ENCODE measurements at regions of chr2 and their contacts with region 1.

Region 1: DNA sequence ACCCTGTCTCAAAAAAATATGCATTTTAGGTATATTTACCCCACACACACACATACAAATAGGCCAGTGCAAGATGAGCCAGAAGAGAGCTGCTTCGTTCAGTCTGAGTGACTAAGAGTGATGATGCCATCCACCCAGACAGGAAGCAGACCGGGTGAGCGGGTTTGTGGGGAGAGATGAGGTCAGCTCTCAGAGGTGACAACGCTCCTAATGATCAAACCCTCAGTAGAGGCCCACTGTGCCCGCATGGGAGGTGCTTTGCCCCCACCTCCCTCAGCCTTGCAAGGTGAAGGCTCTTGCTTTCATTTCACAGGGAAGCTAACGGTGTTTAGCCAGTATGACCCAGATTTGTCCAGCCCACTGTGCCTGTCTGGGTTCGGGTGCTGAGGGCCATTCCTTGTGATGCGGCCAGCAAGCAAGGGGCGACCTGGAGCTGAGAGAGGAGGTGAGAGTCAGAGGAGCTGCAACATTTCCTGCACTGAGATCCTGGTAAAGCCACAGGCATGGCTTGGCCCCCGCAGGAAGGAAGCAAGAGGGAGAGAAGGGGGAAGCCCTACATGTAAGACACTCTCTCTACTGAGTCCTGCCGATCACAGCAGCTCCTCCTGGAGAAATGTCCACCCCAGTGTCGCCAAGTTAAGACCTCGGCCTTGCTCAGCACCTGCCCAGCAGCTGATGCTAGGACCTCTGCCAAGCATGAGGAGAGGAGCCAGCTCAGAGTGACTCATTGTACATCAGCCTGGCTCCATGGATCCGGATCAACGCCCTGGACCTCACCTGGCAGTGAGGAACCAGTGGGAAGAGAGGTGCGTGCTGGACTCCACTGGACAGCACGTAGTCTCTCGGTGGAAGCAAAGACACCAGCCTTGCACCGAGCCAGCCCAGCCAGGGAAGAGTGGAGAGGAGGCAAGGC is 37.0 kb downstream of the NIFK start:
- DNase-seq: peak; percentile 97
- ATAC-seq: peak; percentile 97
- H3K4me3 Mint-ChIP-seq: peak overlapping the region; percentile 81
- H3K27ac Mint-ChIP-seq: peak overlapping the region; percentile 98
- H3K4me1 Mint-ChIP-seq: peaks cover 52% of the 10 kb centered on the region
- H3K27me3 Mint-ChIP-seq: no peaks in the 10 kb centered on the region

Region 2: GRCh38 chr2:121400201-121400600 is 299.5 kb before region 1 on chr2:
- CTCF ChIA-PET with region 1: interaction called, 12 read pairs
- POLR2A ChIA-PET with region 1: no interaction called
- DNase-seq: no peak
- ATAC-seq: no peak
- H3K4me3 Mint-ChIP-seq: no peak overlapping the region
- H3K27ac Mint-ChIP-seq: no peak overlapping the region
- H3K4me1 Mint-ChIP-seq: peaks cover 3% of the 10 kb centered on the region
- H3K27me3 Mint-ChIP-seq: no peaks in the 10 kb centered on the region

Region 3: DNA sequence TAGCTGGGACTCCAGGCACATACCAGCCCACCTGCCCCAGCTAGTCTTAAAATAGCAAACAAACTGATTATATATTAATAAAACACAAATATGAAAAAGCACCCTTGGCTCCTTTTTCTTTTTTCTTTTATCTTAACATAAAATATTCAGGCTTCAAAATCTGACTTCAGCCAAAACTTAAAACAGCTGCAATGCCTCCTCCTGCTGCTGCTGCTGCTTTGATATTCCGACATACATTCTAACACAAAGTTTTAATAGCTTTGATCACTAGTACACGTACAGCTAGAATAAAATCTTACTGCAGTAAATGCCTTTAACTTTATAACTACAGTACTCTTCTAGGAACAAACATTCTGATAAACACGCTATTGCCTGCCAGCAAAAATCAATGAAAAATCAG is 240.4 kb before region 1 on chr2:
- CTCF ChIA-PET with region 1: no interaction called
- POLR2A ChIA-PET with region 1: no interaction called
- DNase-seq: no peak
- ATAC-seq: no peak
- H3K4me3 Mint-ChIP-seq: no peak overlapping the region
- H3K27ac Mint-ChIP-seq: no peak overlapping the region
- H3K4me1 Mint-ChIP-seq: no peaks in the 10 kb centered on the region
- H3K27me3 Mint-ChIP-seq: no peaks in the 10 kb centered on the region

Region 4: DNA sequence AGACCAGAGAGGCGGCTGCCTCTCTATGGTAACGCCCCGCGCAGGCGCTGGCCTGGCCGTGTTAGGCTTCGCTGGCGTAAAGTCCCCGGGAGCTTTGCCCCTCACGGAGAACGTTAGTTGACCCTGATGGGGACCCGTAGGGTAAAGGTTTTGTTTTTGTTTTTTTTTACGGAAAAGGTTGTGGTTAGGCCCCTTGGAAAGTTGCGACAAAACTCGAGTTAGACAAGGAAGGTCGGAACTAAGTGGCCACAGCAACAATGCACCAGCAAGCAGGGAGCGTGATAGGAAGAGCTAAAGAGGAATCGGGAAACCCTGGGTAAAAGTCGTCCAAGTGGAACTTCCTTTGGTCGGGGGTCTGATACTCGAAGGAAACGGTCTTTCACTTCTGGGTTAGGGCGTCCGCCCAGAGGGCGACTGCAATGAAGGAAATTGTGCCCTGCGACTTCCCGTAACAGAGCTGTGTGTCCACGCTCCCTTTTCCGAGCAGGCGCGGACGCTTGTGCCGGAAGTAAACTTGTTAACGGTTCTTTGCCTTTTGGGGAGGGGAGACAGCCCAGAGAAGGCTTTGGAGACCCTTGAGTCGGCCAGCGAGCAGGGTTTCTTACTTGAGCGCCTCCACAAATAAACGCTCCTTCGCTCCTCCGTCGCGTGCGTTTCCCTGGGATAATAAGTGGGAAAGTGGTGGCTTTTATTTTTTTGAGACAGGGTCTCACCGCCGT is 49.9 kb before region 1 on chr2:
- CTCF ChIA-PET with region 1: interaction called, 11 read pairs
- POLR2A ChIA-PET with region 1: interaction called, 110 read pairs
- DNase-seq: peak; percentile 97
- ATAC-seq: peak; percentile 95
- H3K4me3 Mint-ChIP-seq: peak overlapping the region; percentile 100
- H3K27ac Mint-ChIP-seq: peak overlapping the region; percentile 98
- H3K4me1 Mint-ChIP-seq: peaks cover 57% of the 10 kb centered on the region
- H3K27me3 Mint-ChIP-seq: no peaks in the 10 kb centered on the region

Region 5: GRCh38 chr2:121665504-121665903 is 34.2 kb before region 1 on chr2:
- CTCF ChIA-PET with region 1: no interaction called
- POLR2A ChIA-PET with region 1: no interaction called
- DNase-seq: no peak
- ATAC-seq: no peak
- H3K4me3 Mint-ChIP-seq: no peak overlapping the region
- H3K27ac Mint-ChIP-seq: no peak overlapping the region
- H3K4me1 Mint-ChIP-seq: no peaks in the 10 kb centered on the region
- H3K27me3 Mint-ChIP-seq: no peaks in the 10 kb centered on the region

Region 6: GRCh38 chr2:121722479-121722878 is 22.8 kb after region 1 on chr2:
- CTCF ChIA-PET with region 1: interaction called, 8 read pairs
- POLR2A ChIA-PET with region 1: interaction called, 13 read pairs
- DNase-seq: no peak
- ATAC-seq: no peak
- H3K4me3 Mint-ChIP-seq: no peak overlapping the region
- H3K27ac Mint-ChIP-seq: no peak overlapping the region
- H3K4me1 Mint-ChIP-seq: peaks cover 14% of the 10 kb centered on the region
- H3K27me3 Mint-ChIP-seq: no peaks in the 10 kb centered on the region

Region 7: GRCh38 chr2:121736462-121737341 is 37.0 kb after region 1 on chr2 and contains the start of gene NIFK:
- CTCF ChIA-PET with region 1: interaction called, 4 read pairs
- POLR2A ChIA-PET with region 1: interaction called, 20 read pairs
- DNase-seq: peak; percentile 100
- ATAC-seq: peak; percentile 92
- H3K4me3 Mint-ChIP-seq: peak within 1 kb of the TSS; percentile 98
- H3K27ac Mint-ChIP-seq: peak within 1 kb of the TSS; percentile 97
- H3K4me1 Mint-ChIP-seq: peaks cover 47% of the 10 kb centered on the region
- H3K27me3 Mint-ChIP-seq: peaks cover 3% of the 10 kb centered on the region
- total RNA-seq, gene NIFK: 79.8 to 80.1 TPM

Measured in activated CD8-positive, alpha-beta T cell treated with anti-CD3 and anti-CD28 coated beads, Interleukin-2, amount 10 ng/mL, durations not matched to agents 7 days and 5 days (primary cell).